ENCODE measurements at regions of chr16 and their contacts with region 1.

Region 1: GRCh38 chr16:78122774-78123315 is 23.4 kb downstream of the WWOX start:
- DNase-seq: peak; percentile 22
- ATAC-seq: peak; percentile 76
- H3K4me3 ChIP-seq: no peak overlapping the region
- H3K27ac ChIP-seq: no peak overlapping the region
- H3K4me1 ChIP-seq: peaks cover 0 to 2% of the 10 kb centered on the region in 2 experiments; a peak in 1 of 4 replicates
- H3K27me3 ChIP-seq: no peaks in the 10 kb centered on the region
- CTCF ChIP-seq: peak; percentile 24 to 48 (median 33); a peak in 4 of 6 replicates
- POLR2A ChIP-seq: no peak
- RAD21 ChIP-seq: peak; percentile 58

Region 2: DNA sequence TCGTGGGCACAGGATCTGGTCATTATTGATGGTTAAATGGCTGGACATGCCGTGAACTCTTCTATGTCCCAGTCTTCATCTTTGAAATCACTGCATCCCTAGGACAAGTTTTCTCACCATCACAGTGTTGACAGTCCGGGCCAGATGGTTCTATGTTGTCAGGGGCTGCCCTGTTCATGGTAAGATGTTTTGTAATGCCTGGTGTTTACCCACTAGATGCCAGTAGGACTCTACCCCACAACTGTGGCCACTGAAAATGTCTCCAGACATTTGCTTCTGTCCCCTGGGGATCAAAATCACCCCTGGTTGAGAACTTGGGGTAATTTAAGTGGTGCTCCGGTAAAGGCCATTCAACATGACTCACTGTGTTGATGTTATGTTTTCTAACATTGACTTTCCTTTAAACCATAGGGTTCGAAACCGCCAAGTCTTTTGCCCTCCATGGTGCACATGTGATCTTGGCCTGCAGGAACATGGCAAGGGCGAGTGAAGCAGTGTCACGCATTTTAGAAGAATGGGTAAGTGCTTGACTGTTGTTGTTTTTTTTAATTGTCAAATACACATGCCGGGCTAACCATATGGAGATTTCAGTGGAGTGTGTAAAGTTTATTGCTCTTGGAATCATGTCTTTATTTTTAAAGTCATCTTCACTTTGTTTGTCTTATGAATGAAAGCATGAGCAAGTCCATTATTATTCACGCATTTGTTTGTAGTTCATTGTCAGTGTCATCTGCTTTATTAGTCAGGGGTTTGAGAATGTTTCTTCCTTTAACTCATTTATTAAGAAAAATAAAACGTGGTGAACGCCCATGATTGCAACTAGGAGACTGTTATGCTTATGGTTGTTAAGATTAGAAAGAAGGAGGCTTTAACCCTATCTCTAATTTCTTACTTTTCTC is 41.2 kb after region 1 on chr16:
- CTCF ChIA-PET with region 1: no interaction called
- POLR2A ChIA-PET with region 1: no interaction called
- RAD21 ChIA-PET with region 1: no interaction called
- intact Hi-C with region 1: no loop called
- DNase-seq: no peak
- ATAC-seq: no peak
- H3K4me3 ChIP-seq: no peak overlapping the region
- H3K27ac ChIP-seq: no peak overlapping the region
- H3K4me1 ChIP-seq: no peaks in the 10 kb centered on the region
- H3K27me3 ChIP-seq: no peaks in the 10 kb centered on the region
- CTCF ChIP-seq: no peak
- POLR2A ChIP-seq: no peak
- RAD21 ChIP-seq: no peak

Region 3: GRCh38 chr16:78235168-78235800 is 112.4 kb after region 1 on chr16:
- CTCF ChIA-PET with region 1: no interaction called
- POLR2A ChIA-PET with region 1: no interaction called
- RAD21 ChIA-PET with region 1: no interaction called
- intact Hi-C with region 1: loop called (anchors 1 kb)
- DNase-seq: peak; percentile 6
- ATAC-seq: peak; percentile 64
- H3K4me3 ChIP-seq: no peak overlapping the region
- H3K27ac ChIP-seq: no peak overlapping the region
- H3K4me1 ChIP-seq: no peaks in the 10 kb centered on the region
- H3K27me3 ChIP-seq: no peaks in the 10 kb centered on the region
- CTCF ChIP-seq: peak; percentile 10 to 72 (median 63); a peak in 4 of 6 replicates
- POLR2A ChIP-seq: no peak
- RAD21 ChIP-seq: peak; percentile 36

Measured in HCT116 (cell line).